K562 (cell line): ENCODE measurements at regions of chr11 and their contacts with region 1.

Region 1: DNA sequence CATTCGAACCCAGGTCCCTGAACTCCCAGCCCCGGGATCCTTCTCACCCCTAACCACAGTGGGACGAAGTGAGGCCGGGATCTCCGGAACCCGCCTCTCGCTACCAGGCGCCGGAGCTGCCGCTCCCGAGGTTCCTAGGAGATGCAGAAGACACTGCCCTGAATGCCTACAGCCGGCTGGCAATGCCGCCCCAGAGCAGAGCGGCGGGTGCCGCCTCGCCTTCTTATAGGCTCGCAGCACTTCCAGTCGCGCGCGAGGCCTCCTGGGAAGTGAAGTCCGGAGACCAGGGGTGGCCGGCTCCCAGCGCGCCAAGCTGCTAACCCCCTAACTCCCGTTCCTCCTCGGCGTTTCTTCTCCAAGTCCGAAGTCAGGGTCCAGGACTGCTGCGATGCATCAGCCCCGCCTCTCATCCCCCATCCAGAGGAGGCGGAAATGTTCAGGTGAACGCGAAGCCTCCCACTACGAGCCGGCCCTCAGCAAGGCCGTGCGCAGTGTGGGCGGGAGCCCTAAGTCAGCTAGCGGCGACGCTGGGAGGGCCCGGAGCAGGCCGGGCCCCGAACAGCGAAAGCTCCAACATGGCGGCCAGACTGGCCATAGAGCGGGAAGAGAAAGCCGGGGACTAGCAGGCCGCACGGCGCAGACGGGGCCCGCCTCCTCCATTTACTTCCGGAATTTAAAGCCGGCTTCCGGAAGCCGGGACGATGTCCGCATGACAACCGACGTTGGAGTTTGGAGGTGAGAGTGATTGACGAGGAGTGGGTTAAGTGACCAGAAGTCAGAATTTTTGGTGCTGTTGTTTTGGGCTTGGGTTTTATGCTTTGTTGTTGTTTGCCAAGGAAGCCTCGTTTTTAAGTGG is at the starts of genes CYB561A3 and TMEM138:
- DNase-seq: peak; percentile 90 to 96 (median 91)
- ATAC-seq: peak; percentile 94
- H3K4me3 ChIP-seq: peak within 1 kb of the TSS; percentile 67
- H3K27ac ChIP-seq: peak within 1 kb of the TSS; percentile 96
- H3K4me1 ChIP-seq: peaks cover 24 to 36% of the 10 kb centered on the region in 2 experiments
- H3K27me3 ChIP-seq: no peaks in the 10 kb centered on the region
- CTCF ChIP-seq: no peak
- EP300 ChIP-seq: peak; percentile 3; the same call in 1 of the 2 replicates
- POLR2A ChIP-seq: peak; percentile 92
- RAD21 ChIP-seq: no peak
- polyA plus RNA-seq, gene CYB561A3: 30.1 to 44.3 TPM
- polyA plus RNA-seq, gene TMEM138: 127 to 146 TPM

Region 2: GRCh38 chr11:61342207-61342803 is 19.6 kb before region 1 on chr11:
- CTCF ChIA-PET with region 1: interaction called, 3 read pairs
- POLR2A ChIA-PET with region 1: interaction called, 36 read pairs
- in situ Hi-C with region 1: no loop called
- intact Hi-C with region 1: no loop called
- DNase-seq: peak; percentile 74 to 95 (median 84)
- ATAC-seq: peak; percentile 84
- H3K4me3 ChIP-seq: no peak overlapping the region
- H3K27ac ChIP-seq: peak overlapping the region; percentile 73
- H3K4me1 ChIP-seq: peaks cover 39 to 68% of the 10 kb centered on the region in 2 experiments; a peak in 4 of 5 replicates
- H3K27me3 ChIP-seq: no peaks in the 10 kb centered on the region
- CTCF ChIP-seq: no peak
- EP300 ChIP-seq: peak; percentile 77; the same call in 1 of the 2 replicates
- POLR2A ChIP-seq: no peak
- RAD21 ChIP-seq: no peak

Region 3: GRCh38 chr11:61347916-61348461 is 13.9 kb before region 1 on chr11:
- CTCF ChIA-PET with region 1: interaction called, 3 read pairs
- POLR2A ChIA-PET with region 1: interaction called, 36 read pairs
- in situ Hi-C with region 1: no loop called
- intact Hi-C with region 1: no loop called
- DNase-seq: no peak
- ATAC-seq: peak; percentile 48
- H3K4me3 ChIP-seq: no peak overlapping the region
- H3K27ac ChIP-seq: no peak overlapping the region; the same call in 2 of the 3 replicates
- H3K4me1 ChIP-seq: peaks cover 29 to 46% of the 10 kb centered on the region in 2 experiments; a peak in 4 of 5 replicates
- H3K27me3 ChIP-seq: no peaks in the 10 kb centered on the region
- CTCF ChIP-seq: no peak
- EP300 ChIP-seq: no peak
- POLR2A ChIP-seq: no peak; the same call in 1 of the 2 replicates
- RAD21 ChIP-seq: no peak

Region 4: GRCh38 chr11:61375761-61376108 is 13.8 kb after region 1 on chr11:
- CTCF ChIA-PET with region 1: no interaction called
- POLR2A ChIA-PET with region 1: interaction called, 37 read pairs
- in situ Hi-C with region 1: no loop called
- intact Hi-C with region 1: no loop called
- DNase-seq: no peak
- ATAC-seq: no peak
- H3K4me3 ChIP-seq: no peak overlapping the region
- H3K27ac ChIP-seq: no peak overlapping the region
- H3K4me1 ChIP-seq: no peaks in the 10 kb centered on the region
- H3K27me3 ChIP-seq: no peaks in the 10 kb centered on the region
- CTCF ChIP-seq: no peak
- EP300 ChIP-seq: no peak
- POLR2A ChIP-seq: no peak
- RAD21 ChIP-seq: no peak

Region 5: DNA sequence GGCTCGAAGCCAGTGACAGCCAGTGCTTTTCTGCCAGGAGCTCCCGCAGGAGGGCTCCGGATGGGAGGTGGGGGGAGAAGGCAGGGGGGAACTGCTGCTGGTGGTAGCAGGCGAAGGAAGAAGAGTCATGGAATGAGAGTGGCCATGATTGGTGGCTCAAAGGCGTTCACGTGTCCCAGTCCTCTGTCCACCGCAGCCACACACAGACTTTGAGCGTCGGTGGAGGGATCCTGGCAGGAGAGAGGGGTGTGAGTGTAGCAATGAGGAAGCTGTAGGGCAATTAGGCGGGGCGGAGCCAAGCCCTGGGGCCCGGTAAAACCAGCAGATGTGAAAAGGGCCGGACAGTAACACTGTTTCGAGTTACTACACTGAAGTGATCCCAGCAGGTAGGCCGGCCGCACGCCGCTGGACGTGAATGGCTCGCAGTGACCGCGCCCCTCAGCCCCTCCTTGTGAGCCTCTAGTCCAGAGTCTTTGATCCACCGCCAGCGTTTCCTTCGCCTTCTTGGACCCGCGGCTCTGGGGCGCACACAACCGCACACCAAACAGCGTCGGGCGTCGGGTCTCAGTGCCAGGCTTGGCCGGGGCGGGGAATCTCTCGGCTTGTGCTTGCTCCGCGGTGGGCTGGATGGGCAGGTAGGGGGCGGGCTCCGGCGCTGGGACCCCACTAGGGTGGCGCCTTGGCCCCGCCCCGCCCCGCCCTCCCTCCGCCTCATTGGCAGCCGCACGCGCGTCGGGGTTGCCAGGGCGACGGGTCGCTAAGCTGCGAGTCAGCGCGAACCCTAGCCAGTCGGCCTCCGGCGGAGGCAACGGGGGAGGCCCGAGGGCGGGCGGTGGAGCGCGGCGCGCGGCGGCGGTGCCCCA is 146.3 kb after region 1 on chr11 and contains the start of gene LRRC10B:
- CTCF ChIA-PET with region 1: no interaction called
- POLR2A ChIA-PET with region 1: no interaction called
- in situ Hi-C with region 1: no loop called
- intact Hi-C with region 1: no loop called
- DNase-seq: peak; percentile 31 to 84 (median 60)
- ATAC-seq: no peak
- H3K4me3 ChIP-seq: peak within 1 kb of the TSS; percentile 29; the same call in 1 of the 2 replicates
- H3K27ac ChIP-seq: no peak within 1 kb of the TSS
- H3K4me1 ChIP-seq: peaks cover 0 to 25% of the 10 kb centered on the region in 2 experiments; a peak in 3 of 5 replicates
- H3K27me3 ChIP-seq: peaks cover 18 to 75% of the 10 kb centered on the region in 2 experiments
- CTCF ChIP-seq: no peak
- EP300 ChIP-seq: no peak
- POLR2A ChIP-seq: no peak
- RAD21 ChIP-seq: no peak
- polyA plus RNA-seq, gene LRRC10B: not detected